OCI-LY7 (cell line): ENCODE measurements at regions of chr9 and their contacts with region 1.

Region 1: DNA sequence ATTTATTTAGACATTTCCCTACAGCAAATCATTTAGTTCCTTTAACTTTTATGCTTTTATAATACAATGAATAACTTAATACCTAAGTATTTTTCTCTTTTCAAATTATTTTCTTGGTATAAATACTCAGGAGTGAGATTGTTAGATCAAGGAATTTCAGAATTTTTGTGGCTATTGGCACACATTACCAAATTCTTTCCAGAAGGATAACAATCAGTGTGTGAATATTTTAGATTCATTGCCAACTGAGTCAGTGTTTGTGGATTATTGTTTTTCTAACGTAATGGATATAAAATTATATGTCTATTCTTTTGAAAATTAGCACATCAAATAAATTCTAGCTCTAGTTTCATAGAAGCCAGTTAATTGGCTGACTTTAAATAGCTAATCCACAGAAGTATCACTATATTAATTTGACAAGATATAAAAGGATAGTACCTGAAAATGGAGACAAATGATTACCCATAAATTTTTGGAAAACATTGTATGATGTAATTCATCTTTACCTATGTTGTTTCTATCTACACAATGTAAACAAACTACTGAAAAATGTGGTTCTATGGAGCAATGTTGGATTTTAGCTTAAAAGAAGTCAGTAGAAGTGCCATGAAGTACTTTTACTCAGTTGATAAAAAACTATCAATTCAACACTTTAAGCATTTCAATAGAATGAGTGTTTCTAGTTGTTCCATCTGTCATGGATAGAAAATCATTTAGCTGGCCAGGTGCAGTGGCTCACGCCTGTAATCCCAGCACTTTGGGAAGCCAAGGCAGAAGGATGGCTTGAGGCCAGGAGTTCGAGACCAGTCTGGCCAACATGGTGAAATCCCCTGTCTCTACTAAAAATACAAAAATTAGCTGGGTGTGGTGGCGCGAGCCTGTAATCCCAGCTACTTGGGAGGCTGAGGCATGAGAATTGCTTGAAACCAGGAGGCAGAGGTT is 185.1 kb downstream of the ADAMTSL1 start:
- DNase-seq: no peak
- H3K4me3 ChIP-seq: no peak overlapping the region
- H3K27ac ChIP-seq: no peak overlapping the region
- H3K4me1 ChIP-seq: no peaks in the 10 kb centered on the region
- CTCF ChIP-seq: no peak

Region 2: DNA sequence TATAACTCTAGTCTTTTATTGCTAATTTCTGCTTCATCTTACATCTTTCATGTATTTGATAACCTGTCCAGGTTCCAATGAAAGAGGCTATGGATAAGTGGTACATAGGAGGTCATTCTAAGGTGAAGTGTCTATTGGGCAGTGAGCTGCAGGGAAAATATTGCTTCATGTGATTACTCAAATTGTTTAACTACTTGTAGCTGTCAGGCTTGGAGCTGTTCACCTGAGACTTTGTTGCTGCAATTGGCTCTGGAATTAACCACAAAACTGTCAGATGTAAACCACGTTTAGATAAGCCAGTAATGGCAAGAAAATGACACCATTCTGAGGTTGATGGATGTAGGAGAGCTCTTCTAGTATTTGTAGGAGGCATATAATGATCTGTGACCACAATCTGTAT is 159.1 kb before region 1 on chr9:
- CTCF ChIA-PET with region 1: no interaction called
- POLR2A ChIA-PET with region 1: no interaction called
- intact Hi-C with region 1: loop called (anchors 10 kb)
- DNase-seq: no peak
- H3K4me3 ChIP-seq: no peak overlapping the region
- H3K27ac ChIP-seq: no peak overlapping the region
- H3K4me1 ChIP-seq: no peaks in the 10 kb centered on the region
- CTCF ChIP-seq: no peak

Region 3: GRCh38 chr9:18675332-18675731 is 16.3 kb after region 1 on chr9:
- CTCF ChIA-PET with region 1: no interaction called
- POLR2A ChIA-PET with region 1: no interaction called
- intact Hi-C with region 1: no loop called
- DNase-seq: no peak
- H3K4me3 ChIP-seq: no peak overlapping the region
- H3K27ac ChIP-seq: no peak overlapping the region
- H3K4me1 ChIP-seq: no peaks in the 10 kb centered on the region
- CTCF ChIP-seq: no peak